Common myeloid progenitor, CD34-positive (primary cell): ENCODE measurements at regions of chr2 and their contacts with region 1.

Region 1: GRCh38 chr2:105114551-105114950 is 76.7 kb downstream of the MRPS9 start:
- DNase-seq: peak; percentile 54 to 60 (median 60)
- H3K4me3 ChIP-seq: no peak overlapping the region
- H3K27ac ChIP-seq: no peak overlapping the region
- H3K4me1 ChIP-seq: no peaks in the 10 kb centered on the region
- H3K27me3 ChIP-seq: no peaks in the 10 kb centered on the region

Region 2: DNA sequence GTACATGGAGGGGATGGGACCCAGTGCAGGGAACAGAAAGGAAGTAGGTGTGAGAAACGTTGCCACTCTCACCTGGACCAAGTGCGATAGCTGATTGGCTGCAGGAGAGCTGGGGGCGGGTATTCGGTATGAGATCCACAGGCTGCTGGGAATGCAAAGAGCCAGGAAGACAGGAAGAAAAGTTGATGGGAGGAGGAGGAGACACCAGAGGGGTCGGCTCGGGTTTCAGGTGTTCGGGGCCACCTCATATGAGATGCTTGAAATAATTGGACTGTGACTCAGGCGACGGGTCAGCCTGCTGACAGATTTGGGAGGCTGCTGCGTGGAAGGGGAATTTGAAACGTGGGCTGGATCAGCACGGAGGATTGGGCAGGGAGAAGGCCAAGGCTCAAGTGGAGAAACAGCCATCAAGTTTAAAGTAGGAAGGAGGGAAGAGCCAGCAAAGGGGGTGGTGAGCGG is 11.6 kb before region 1 on chr2:
- CTCF ChIA-PET with region 1: interaction called, 15 read pairs
- POLR2A ChIA-PET with region 1: no interaction called
- DNase-seq: no peak
- H3K4me3 ChIP-seq: no peak overlapping the region
- H3K27ac ChIP-seq: no peak overlapping the region
- H3K4me1 ChIP-seq: no peaks in the 10 kb centered on the region
- H3K27me3 ChIP-seq: no peaks in the 10 kb centered on the region

Region 3: GRCh38 chr2:105125428-105125827 is 10.9 kb after region 1 on chr2:
- CTCF ChIA-PET with region 1: interaction called, 18 read pairs
- POLR2A ChIA-PET with region 1: no interaction called
- DNase-seq: peak in 1 of 3 donors; percentile 18
- H3K4me3 ChIP-seq: no peak overlapping the region
- H3K27ac ChIP-seq: no peak overlapping the region
- H3K4me1 ChIP-seq: peaks cover 6 to 13% (median 9%) of the 10 kb centered on the region in 4 experiments
- H3K27me3 ChIP-seq: no peaks in the 10 kb centered on the region

Region 4: DNA sequence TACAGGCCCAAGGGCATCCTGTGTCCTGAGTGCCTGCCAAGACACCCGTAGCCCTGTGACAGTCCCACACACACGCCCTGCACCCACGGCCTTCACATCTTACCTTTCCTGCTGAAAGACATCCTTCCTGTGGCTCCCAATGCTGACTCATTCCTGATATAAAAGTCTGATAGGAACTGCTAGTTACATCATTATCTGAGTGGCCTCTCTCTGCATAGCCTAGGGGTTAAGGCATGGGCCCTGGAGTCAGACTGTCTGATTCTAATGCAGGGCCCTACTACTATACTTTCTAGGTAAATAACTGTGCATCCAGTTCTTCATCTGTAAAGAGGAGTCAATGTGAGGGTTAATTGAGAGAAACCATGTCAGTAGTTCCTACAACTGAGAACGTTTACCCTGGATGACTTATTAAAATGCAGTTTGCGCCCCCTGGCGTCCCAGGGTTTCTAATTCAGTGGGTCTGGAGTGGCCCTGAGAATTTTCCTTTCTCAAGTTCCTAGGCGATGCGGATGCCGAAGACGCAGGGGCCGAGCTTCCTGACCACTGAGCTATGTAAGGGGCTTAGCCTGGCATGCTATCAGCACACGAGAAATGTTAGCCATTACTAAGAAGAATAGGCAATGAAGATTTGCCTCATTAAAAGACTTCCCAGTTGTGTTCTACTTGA is 121.0 kb after region 1 on chr2:
- CTCF ChIA-PET with region 1: interaction called, 268 read pairs
- POLR2A ChIA-PET with region 1: interaction called, 3 read pairs
- DNase-seq: peak; percentile 75 to 83 (median 79)
- H3K4me3 ChIP-seq: no peak overlapping the region
- H3K27ac ChIP-seq: no peak overlapping the region
- H3K4me1 ChIP-seq: peaks cover 0 to 10% (median 3%) of the 10 kb centered on the region in 4 experiments
- H3K27me3 ChIP-seq: peaks cover 0 to 7% (median 0%) of the 10 kb centered on the region in 5 experiments